ENCODE measurements at regions of chr12 and their contacts with region 1.

Region 1: DNA sequence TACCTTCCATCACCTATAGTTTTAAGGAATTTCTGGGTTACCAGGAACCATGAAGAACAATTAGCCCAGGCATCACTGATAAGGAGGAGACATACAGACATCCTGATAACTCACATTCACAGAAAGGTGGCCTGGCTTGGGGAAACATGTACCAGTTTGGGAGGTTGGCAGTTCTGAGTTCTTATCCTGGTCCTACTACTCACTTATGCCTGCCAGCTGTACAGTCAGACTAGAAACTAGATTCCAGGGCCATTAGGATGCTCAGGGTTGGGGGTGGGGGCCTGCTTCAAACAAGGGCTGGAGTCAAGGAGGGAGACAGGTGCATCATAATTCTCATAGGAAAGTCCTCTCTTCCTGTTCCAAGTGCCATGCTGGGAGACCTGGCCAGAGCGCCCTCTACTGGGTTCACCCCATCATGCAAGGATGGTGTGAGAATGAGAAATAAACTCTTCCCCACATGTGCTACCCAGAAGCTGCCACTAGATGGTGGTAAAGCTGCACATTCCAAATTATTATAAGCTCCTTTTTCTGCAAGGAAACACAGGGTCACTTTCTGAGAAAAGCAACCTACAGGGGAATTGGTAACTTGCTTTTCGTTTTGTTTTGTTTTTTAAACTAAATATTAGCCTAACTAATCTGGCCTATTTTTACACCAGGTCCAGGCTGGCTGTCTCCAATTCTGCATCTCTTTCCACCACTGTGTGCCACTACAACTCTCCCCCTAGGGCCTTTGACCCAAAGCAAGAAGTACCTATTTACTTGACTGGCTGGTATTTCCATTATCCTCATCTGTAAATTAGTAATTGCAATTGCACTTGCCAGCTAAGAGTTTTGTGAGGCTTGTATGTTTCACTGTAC is 14.5 kb downstream of the OAS2 start:
- DNase-seq: peak; percentile 82
- H3K4me3 ChIP-seq: no peak overlapping the region
- H3K27ac ChIP-seq: peak overlapping the region; percentile 47
- H3K4me1 ChIP-seq: peaks cover 30% of the 10 kb centered on the region
- CTCF ChIP-seq: peak; percentile 100

Region 2: GRCh38 chr12:112881602-112882001 is 111.2 kb before region 1 on chr12:
- CTCF ChIA-PET with region 1: no interaction called
- POLR2A ChIA-PET with region 1: no interaction called
- intact Hi-C with region 1: no loop called
- DNase-seq: no peak
- H3K4me3 ChIP-seq: no peak overlapping the region
- H3K27ac ChIP-seq: no peak overlapping the region
- H3K4me1 ChIP-seq: no peaks in the 10 kb centered on the region
- CTCF ChIP-seq: no peak

Region 3: DNA sequence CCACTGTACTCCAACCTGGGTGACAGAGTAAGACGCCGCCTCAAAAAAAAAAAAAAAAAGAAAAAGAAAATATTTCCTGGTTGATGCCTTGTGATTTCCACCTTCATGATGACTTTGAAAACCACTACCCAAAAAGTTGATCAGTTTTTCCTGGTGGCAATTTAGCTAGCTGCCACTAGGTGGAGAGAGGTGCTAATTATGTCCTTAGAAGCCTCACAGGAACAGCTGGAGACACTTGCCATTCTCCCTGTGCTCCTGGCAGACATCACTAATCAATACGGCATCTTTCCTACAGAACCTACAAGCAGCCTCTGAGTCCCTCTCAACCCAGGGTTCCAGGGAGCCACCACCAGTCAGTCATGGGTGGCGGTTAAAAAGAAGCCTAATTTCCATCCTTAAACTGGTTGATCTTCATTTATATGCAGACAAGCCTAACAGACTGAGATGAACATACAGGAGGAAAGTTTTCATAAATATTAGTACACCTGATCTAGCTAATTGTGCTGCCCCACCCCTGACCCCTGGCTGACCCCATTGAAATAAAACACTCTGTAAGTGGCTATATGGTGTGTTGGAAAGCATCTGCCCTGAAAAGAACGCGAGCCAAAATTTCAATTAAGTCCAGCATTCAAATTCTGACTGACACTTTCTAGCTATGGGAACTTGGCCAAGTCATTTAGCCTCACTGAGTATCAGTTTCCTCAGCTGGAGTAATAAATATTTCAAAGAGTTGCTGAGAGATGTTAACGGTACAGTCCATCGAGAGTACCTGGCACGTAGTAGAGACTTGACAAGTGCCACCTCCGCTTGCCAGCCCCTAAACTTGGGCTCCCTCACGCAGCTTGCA is 92.2 kb before region 1 on chr12:
- CTCF ChIA-PET with region 1: interaction called, 3 read pairs
- POLR2A ChIA-PET with region 1: interaction called, 6 read pairs
- intact Hi-C with region 1: loop called (anchors 2 kb)
- DNase-seq: peak; percentile 79
- H3K4me3 ChIP-seq: no peak overlapping the region
- H3K27ac ChIP-seq: peak overlapping the region; percentile 7
- H3K4me1 ChIP-seq: peaks cover 45% of the 10 kb centered on the region
- CTCF ChIP-seq: peak; percentile 85

Region 4: GRCh38 chr12:112944028-112944690 is 48.6 kb before region 1 on chr12:
- CTCF ChIA-PET with region 1: no interaction called
- POLR2A ChIA-PET with region 1: no interaction called
- intact Hi-C with region 1: no loop called
- DNase-seq: no peak
- H3K4me3 ChIP-seq: no peak overlapping the region
- H3K27ac ChIP-seq: no peak overlapping the region
- H3K4me1 ChIP-seq: peaks cover 16% of the 10 kb centered on the region
- CTCF ChIP-seq: no peak

Region 5: GRCh38 chr12:112978163-112979040 is 14.4 kb before region 1 on chr12 and contains the start of gene OAS2:
- CTCF ChIA-PET with region 1: interaction called, 4 read pairs
- POLR2A ChIA-PET with region 1: interaction called, 14 read pairs
- intact Hi-C with region 1: no loop called
- DNase-seq: peak; percentile 93
- H3K4me3 ChIP-seq: peak within 1 kb of the TSS; percentile 81
- H3K27ac ChIP-seq: peak within 1 kb of the TSS; percentile 90
- H3K4me1 ChIP-seq: peaks cover 41% of the 10 kb centered on the region
- CTCF ChIP-seq: no peak
- total RNA-seq, gene OAS2: 22.7 and 33.2 TPM in 2 replicates

Region 6: GRCh38 chr12:113030875-113031525 is 38.2 kb after region 1 on chr12:
- CTCF ChIA-PET with region 1: interaction called, 7 read pairs
- POLR2A ChIA-PET with region 1: interaction called, 6 read pairs
- intact Hi-C with region 1: loop called (anchors 1 kb)
- DNase-seq: peak; percentile 85
- H3K4me3 ChIP-seq: no peak overlapping the region
- H3K27ac ChIP-seq: peak overlapping the region; percentile 50
- H3K4me1 ChIP-seq: peaks cover 24% of the 10 kb centered on the region
- CTCF ChIP-seq: peak; percentile 94

Region 7: DNA sequence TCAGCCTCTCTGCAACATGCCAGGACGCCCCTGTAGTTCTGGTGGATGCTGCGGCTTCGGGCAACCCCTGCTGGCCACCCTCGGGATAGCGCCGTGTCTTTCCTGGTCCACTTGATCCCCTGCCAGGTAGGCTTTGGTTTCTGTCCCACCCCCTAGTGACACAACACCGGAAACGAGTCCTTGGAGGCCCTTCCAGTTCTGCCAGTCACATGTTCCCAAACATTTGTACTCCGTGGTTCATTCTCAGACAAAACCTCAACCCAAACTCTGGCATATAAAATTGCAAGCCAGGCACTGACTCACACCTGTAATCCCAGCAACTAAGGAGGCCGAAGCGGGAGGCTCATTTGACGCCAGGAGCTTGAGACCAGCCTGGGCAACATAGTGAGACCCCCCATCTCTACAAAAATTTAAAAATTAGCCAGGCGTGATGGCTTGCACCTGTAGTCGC is 105.7 kb after region 1 on chr12:
- CTCF ChIA-PET with region 1: no interaction called
- POLR2A ChIA-PET with region 1: no interaction called
- intact Hi-C with region 1: loop called (anchors 1 kb)
- DNase-seq: peak; percentile 82
- H3K4me3 ChIP-seq: no peak overlapping the region
- H3K27ac ChIP-seq: peak overlapping the region; percentile 88
- H3K4me1 ChIP-seq: peaks cover 75% of the 10 kb centered on the region
- CTCF ChIP-seq: peak; percentile 91

Region 8: DNA sequence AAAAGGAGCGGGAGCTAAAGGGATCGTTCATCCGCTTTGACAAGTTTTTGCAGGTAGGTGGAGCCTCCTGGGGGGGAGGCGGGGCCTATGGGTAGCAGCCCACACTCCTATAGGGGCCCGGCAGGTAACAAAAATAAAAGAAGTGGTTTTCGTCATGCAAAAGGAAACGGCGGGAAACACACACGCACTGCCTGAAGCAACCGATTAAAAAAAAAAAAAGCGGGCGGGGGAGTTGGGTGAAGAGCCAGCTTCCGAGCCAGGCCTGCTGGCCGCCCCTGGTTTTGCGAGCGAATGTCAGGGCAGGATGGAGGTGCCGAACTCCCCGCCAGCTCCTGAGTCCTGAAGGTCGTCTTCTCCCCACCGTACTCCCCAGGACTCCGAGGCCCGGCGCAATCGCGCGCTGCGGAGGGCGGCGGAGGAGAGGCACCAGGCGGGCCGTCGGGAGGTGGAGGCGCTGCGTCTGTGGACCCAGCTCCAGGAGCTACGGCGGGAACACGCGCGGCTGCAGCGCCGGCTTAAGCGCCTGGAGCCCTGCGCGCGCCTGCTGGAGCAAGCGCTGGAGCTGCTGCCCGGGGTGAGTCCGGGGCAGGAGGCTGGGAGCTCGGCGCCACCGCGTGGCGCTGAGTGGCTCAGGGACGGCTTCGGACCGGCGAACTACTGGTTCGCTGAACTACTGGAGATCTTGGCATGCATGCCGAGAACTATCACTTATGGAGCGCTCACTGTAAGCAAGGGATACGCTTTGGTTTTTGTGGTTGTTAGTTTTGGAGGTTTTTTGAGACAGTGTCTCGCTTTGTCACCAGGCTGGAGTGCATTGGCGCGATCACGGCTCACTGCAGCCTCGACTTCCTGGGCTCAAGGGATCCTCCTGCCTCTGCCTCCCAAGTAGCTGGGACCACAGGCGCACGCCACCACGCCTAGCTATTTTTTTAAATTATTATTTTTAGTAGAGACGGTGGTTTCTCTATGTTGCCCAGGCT is 160.4 kb after region 1 on chr12:
- CTCF ChIA-PET with region 1: interaction called, 3 read pairs
- POLR2A ChIA-PET with region 1: interaction called, 5 read pairs
- intact Hi-C with region 1: loop called (anchors 1 kb)
- DNase-seq: peak; percentile 92
- H3K4me3 ChIP-seq: peak overlapping the region; percentile 78
- H3K27ac ChIP-seq: peak overlapping the region; percentile 90
- H3K4me1 ChIP-seq: peaks cover 57% of the 10 kb centered on the region
- CTCF ChIP-seq: peak; percentile 79

Region 9: DNA sequence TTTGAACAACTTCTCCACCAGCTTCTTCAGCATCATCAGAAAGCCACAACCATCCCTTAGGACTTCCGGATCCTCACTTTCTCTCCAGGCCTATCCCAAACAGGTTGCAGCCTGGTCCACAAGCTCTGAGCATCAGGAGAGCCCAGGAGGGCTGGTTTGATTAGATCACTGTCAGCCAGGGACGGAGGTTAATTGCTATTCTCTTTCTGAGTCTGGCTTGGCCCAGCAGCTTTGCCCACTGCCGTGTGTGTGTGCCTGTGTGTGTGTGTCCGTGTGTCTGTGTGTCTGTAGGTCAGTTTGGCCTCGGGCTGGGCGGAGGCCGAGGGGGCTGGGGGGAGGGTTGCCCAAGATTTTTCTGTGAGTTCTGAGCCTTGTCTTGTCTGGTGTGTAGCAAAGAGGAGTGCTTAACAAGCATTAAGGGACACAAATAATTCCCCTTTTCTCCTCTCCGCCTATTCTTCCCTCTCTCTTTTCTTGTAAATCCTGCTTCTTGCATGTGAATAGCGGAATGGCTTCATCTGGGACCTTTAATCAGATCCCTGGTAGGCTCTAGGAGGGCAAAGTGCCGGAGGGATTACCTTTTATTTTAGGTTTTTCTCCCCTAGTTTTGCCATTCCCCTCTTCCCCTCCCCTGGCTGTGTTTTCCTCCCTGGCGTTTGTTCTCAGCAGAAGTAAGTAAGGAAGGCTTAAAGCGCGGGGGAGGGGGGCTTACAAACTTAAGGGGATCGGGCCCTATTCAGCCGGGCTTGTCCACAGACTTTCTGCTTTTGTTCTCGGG is 617.1 kb after region 1 on chr12:
- CTCF ChIA-PET with region 1: no interaction called
- POLR2A ChIA-PET with region 1: no interaction called
- intact Hi-C with region 1: no loop called
- DNase-seq: no peak
- H3K4me3 ChIP-seq: no peak overlapping the region
- H3K27ac ChIP-seq: no peak overlapping the region
- H3K4me1 ChIP-seq: no peaks in the 10 kb centered on the region
- CTCF ChIP-seq: no peak

Measured in OCI-LY7 (cell line).